Calu3 (cell line): ENCODE measurements at regions of chr21 and their contacts with region 1.

Region 1: DNA sequence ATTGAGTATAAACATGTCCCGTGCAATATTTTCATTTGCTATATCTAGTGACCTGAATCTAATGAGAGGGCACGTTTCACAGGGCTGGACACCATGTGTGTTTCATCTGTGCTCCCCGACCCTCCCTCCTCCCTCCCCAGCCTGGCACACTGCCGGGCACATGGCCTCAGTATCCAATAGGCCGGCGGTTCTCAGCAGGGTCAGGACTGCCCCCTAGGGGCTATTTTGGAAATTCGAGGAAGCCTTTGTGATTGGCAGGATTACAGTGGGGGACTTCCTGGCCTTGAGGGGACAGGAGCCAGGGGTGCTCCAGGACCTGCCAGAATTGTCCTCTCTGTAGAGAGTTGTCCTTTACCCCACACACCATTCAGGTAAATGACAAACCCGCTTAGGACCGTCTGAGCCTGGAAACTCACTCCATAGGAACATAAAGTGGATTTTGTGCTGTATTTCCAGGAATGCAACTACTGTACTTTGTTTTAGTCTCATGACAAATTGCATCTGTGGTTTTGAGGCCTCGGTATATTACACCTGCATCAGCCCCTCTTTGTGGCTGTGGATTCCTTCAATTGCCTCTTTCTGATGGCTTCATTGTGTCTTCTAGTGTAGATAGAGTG is 109.5 kb upstream of the SIM2 start:
- DNase-seq: peak; percentile 49
- H3K4me3 Mint-ChIP-seq: no peak overlapping the region
- H3K27ac Mint-ChIP-seq: no peak overlapping the region
- H3K4me1 Mint-ChIP-seq: no peaks in the 10 kb centered on the region
- H3K27me3 Mint-ChIP-seq: peaks cover 31% of the 10 kb centered on the region
- CTCF ChIP-seq: peak; percentile 67

Region 2: GRCh38 chr21:36419996-36420395 is 169.5 kb before region 1 on chr21:
- CTCF ChIA-PET with region 1: no interaction called
- intact Hi-C with region 1: loop called (anchors 1 kb)
- DNase-seq: peak; percentile 81
- H3K4me3 Mint-ChIP-seq: no peak overlapping the region
- H3K27ac Mint-ChIP-seq: no peak overlapping the region
- H3K4me1 Mint-ChIP-seq: peaks cover 9% of the 10 kb centered on the region
- H3K27me3 Mint-ChIP-seq: no peaks in the 10 kb centered on the region
- CTCF ChIP-seq: peak; percentile 54

Region 3: DNA sequence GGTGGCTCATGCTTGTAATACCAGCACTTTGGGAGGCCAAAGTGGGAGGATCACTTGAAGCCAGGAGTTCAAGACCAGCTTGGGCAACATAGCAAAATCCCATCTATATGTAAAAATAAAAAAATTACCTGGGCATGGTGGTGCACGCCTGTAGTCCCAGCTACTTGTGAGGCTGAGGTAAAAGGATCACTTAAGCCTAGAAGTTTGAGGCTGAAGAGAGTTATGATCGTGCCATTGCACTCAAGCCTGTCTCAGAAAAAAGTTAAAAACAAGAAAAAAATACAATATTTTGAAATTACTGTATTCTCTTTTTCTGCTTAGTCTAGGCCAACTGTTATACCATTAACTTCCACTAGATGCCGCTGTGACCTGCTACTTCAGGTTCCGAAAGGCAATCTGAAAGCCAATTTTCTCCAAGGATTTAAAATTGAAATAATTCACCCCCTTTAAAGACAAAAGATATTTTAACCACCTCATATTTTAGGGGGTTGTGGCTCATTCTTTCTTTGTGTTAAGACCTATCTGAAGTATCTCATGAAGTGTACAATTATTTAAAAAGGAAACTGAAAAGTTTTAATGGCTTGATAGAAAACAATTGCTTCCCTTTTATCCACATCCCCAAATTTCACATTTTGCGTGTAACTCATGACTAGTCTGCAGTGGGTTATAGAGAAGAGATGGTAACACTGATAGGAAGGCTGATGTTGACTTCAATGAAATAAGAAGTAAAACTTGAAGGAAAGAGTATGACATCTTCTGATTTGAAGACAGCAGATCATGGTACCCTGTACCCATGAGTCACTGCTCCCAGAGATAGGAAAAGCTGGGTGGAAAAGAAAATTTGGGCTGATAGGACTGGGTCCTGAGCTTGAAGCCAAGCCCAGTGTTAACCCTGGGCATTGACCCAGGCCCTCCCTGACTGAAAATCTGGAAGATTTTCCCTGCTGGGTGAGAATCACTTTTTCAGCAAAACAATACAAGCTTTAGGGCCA is 85.1 kb before region 1 on chr21:
- CTCF ChIA-PET with region 1: no interaction called
- intact Hi-C with region 1: loop called (anchors 2 kb)
- DNase-seq: peak; percentile 37
- H3K4me3 Mint-ChIP-seq: no peak overlapping the region
- H3K27ac Mint-ChIP-seq: no peak overlapping the region
- H3K4me1 Mint-ChIP-seq: peaks cover 12% of the 10 kb centered on the region
- H3K27me3 Mint-ChIP-seq: no peaks in the 10 kb centered on the region
- CTCF ChIP-seq: peak; percentile 39